Calu3 (cell line): ENCODE measurements at regions of chr5 and their contacts with region 1.

Region 1: DNA sequence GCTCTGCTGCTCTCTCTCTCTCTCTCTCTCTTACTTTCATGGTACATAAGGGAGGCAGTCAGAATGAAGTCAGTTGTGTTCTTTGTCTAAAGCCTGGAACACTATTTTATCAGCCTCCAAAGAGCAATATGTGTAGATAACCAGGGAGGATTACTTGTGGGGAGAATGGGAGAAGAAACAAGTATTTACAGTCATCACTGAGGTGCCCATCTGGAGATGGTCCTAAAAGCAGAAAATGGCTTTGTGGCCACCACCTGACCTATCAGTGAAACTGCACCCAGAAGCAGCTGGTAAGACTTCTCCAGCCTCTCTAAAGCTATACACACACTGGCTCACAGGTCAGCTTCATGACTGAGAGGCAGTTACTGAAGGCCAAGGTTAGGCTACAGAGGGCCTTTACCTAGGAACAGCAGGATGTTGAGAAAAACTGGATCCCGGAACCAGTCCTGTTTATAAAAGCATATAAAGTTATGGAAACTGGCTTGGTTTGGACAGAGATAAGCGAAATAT is 75.1 kb downstream of the MRPS27 start:
- DNase-seq: peak; percentile 26
- H3K4me3 Mint-ChIP-seq: no peak overlapping the region
- H3K27ac Mint-ChIP-seq: no peak overlapping the region
- H3K4me1 Mint-ChIP-seq: peaks cover 25% of the 10 kb centered on the region
- H3K27me3 Mint-ChIP-seq: no peaks in the 10 kb centered on the region
- CTCF ChIP-seq: peak; percentile 36

Region 2: DNA sequence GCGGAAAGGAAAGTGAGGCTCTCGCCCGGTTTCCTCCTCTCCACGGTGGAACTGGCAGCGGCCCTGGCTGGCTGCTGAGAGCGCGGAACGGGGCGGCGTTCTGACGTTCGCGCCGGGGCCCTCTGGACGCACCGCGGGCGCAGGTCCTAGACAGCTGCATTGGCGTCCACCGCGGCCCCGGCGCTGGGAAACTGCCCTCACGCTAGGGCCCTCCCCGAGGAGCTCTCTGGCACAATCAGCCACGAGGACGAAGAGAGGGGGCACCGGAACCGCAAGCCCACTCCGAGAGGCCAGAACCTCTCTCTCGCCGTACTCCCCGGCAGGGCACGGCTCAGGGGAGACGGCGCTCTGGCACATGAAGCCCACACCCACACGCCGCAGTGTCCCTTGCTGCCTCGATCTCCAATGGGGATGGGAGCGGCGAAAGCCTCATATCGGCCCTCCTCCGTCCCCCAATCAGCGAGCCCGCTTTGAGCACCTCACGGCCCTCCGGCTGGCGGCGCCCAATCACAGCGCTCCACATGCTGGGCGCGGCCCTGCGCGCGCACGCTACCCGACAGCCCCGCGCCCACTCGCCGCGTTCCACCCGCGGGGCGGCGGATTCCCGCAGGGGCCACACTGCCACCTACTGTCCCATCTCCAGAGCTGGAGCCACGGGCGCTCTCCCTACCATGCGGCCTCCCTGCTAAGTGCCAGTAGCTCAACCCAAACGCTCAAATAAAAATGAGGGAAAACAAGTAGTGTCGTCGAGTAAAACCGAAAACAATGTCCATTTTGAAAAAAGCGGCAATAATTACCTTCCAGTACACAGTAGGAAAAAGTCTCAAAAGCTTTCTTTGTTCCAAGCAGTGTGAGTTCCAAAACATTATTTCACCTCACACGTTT is 63.3 kb after region 1 on chr5:
- CTCF ChIA-PET with region 1: interaction called, 12 read pairs
- intact Hi-C with region 1: no loop called
- DNase-seq: peak; percentile 96
- H3K4me3 Mint-ChIP-seq: peak overlapping the region; percentile 79
- H3K27ac Mint-ChIP-seq: peak overlapping the region; percentile 98
- H3K4me1 Mint-ChIP-seq: peaks cover 16% of the 10 kb centered on the region
- H3K27me3 Mint-ChIP-seq: no peaks in the 10 kb centered on the region
- CTCF ChIP-seq: peak; percentile 77